ENCODE measurements at regions of chr4 and their contacts with region 1.

Region 1: DNA sequence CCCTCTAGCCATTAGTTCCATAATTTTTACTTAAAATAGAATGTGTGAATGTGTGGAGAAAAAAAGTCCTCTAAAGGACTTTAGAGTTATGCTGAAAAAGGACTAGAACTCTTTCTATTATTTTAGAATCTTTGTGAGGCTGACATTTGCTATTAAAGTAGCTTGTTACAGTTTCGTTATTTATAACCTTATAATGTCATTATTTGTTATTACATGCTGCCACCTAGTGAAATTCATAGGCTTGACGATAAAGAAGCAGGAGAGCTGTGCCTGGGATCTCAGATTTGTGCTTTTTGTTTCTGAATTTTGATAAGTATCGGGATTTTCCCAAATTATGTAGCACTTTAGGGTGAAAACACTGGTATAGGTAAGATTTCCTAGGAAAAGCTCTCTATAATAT is 38.5 kb upstream of the TAPT1 start:
- DNase-seq: peak; percentile 61 to 79 (median 74)
- H3K4me3 ChIP-seq: no peak overlapping the region
- H3K27ac ChIP-seq: no peak overlapping the region
- H3K4me1 ChIP-seq: peaks cover 6 to 10% (median 8%) of the 10 kb centered on the region in 4 experiments
- H3K27me3 ChIP-seq: no peaks in the 10 kb centered on the region

Region 2: GRCh38 chr4:15963001-15963451 is 301.8 kb before region 1 on chr4 and contains the start of gene FGFBP2:
- CTCF ChIA-PET with region 1: interaction called, 14 read pairs
- POLR2A ChIA-PET with region 1: no interaction called
- DNase-seq: peak; percentile 71 to 88 (median 84)
- H3K4me3 ChIP-seq: peak within 1 kb of the TSS in 2 of 7 experiments; percentile 23 to 46
- H3K27ac ChIP-seq: no peak within 1 kb of the TSS
- H3K4me1 ChIP-seq: peaks cover 5 to 15% (median 10%) of the 10 kb centered on the region in 4 experiments
- H3K27me3 ChIP-seq: no peaks in the 10 kb centered on the region

Region 3: DNA sequence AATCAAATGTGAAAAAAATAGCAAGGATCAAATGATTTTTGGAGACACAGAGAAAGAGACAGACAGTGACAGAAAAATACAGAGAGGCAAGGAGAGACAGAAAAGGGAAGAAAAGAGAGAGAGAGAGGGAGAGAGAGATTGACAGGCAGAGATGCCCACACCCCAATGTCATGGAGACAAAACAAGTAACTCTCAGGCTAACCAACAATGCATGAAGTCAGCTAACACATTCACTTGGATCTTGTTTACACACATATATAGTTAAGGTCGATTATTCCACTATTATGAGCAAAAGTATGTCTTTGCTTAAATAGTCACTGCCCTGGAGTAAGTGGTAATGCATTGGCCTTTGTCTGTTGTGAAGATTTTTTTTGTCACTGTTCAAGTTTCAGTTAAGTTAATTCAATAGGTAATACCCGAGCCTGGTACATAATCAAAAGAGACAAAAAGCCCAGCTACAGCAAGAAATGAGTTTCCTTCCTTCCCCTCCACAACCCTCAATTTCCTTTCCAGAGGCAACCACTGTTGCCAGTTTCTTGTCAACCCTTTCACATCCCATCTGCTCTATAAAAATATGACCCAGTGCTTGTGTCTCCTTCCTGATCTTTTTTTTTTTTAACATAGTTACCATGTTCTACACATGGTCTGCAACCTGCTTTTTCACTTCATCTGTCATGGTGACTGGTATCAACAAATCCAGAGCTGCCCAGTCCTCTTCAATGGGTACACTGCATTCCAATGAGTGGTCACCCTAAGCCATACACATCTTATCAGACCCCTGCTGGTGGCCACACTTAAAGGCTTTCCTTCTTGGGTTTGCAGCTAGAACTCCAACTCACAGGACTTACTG is 233.0 kb before region 1 on chr4:
- CTCF ChIA-PET with region 1: interaction called, 10 read pairs
- POLR2A ChIA-PET with region 1: interaction called, 5 read pairs
- DNase-seq: peak; percentile 48 to 90 (median 85)
- H3K4me3 ChIP-seq: peak overlapping the region in 3 of 7 experiments; percentile 21 to 46 (median 38)
- H3K27ac ChIP-seq: peak overlapping the region; percentile 69 to 82
- H3K4me1 ChIP-seq: peaks cover 28 to 81% (median 68%) of the 10 kb centered on the region in 4 experiments
- H3K27me3 ChIP-seq: no peaks in the 10 kb centered on the region

Region 4: DNA sequence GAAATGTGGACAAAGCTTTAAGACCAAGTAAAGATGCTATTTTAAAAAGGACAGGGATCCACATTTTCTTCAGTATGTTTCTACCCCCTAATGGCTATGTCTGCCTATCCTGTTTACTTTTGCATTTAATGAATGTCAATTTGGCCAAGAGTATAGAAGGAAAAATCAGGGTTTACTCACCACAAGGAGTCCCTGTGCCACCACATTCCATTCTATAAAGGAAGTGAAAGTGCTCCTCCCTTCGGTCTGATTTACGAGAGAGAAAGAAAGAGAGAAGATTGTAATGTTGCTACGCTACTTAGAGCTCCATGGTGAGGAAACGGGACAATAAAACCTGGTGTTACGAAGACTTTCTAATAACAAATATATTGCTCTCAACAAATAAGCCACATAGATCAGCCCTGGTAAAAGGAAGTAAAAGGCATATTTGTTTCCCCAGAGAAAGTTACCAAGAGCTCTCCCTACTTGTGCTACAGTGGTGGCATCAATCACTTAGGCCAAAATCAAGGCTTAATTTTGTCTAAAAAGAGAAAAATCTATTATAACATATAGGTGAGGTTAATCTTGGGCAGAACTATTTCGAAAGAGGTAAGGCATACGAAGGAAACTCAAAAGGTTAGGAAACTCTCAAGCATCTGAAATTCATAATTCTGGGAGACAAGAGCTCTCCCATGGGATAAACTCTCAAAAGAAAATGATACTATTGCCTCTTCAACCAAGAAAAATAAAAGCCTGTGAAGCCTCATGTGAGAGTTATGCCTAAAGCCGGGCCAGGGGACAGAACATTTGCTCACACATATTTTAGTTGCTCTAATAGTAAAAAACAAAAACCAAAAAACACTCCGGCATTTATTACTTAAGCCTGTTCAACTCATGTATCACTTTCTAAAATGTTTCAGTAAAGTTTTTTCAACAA is 68.1 kb before region 1 on chr4:
- CTCF ChIA-PET with region 1: interaction called, 28 read pairs
- POLR2A ChIA-PET with region 1: no interaction called
- DNase-seq: peak; percentile 55 to 70 (median 67)
- H3K4me3 ChIP-seq: peak overlapping the region in 4 of 7 experiments; percentile 15 to 53 (median 40)
- H3K27ac ChIP-seq: no peak overlapping the region
- H3K4me1 ChIP-seq: peaks cover 9 to 22% (median 13%) of the 10 kb centered on the region in 4 experiments
- H3K27me3 ChIP-seq: no peaks in the 10 kb centered on the region

Region 5: DNA sequence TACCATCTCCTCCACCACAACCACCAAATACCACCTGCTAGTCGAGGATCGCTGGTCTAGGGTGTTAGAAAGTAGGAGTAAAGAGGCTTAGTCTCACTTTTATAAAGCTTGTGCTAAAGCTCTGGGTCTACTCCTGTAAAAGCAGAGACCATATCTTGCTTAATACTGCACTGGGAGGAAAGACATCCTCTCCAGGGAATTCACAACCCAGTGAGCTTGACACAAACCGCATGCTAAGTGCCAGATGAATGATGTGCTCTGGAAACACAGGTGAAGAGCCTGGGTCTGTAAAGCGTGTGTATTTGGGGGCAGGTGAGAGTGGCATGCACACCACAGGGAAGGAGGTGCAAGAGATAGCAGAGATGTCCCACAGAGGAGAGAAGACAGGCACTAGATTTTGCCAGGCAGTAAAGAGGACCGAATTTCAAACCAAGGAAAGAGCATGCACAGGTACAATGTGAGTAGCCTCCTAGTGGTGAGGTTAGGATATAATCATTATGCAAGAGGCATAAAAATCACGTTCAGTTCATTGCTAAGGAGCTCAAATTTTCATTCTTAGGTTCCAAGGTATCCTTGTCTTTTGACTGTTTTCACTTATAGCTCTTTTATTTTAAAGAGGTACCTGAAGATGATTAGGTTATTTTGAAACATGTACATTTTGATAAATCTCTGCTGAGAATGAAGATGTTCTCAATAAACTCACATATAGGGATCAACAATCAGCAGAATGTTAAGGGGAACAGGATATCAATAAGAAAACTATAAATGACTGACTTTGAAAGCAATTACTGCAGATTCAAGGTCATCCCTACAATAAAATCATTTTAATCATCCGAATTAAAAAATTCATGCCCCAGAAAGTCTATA is 59.3 kb before region 1 on chr4:
- CTCF ChIA-PET with region 1: interaction called, 25 read pairs
- POLR2A ChIA-PET with region 1: no interaction called
- DNase-seq: peak in 2 of 3 donors; percentile 61 to 63
- H3K4me3 ChIP-seq: no peak overlapping the region
- H3K27ac ChIP-seq: no peak overlapping the region
- H3K4me1 ChIP-seq: peaks cover 3 to 30% (median 18%) of the 10 kb centered on the region in 4 experiments
- H3K27me3 ChIP-seq: no peaks in the 10 kb centered on the region

Region 6: DNA sequence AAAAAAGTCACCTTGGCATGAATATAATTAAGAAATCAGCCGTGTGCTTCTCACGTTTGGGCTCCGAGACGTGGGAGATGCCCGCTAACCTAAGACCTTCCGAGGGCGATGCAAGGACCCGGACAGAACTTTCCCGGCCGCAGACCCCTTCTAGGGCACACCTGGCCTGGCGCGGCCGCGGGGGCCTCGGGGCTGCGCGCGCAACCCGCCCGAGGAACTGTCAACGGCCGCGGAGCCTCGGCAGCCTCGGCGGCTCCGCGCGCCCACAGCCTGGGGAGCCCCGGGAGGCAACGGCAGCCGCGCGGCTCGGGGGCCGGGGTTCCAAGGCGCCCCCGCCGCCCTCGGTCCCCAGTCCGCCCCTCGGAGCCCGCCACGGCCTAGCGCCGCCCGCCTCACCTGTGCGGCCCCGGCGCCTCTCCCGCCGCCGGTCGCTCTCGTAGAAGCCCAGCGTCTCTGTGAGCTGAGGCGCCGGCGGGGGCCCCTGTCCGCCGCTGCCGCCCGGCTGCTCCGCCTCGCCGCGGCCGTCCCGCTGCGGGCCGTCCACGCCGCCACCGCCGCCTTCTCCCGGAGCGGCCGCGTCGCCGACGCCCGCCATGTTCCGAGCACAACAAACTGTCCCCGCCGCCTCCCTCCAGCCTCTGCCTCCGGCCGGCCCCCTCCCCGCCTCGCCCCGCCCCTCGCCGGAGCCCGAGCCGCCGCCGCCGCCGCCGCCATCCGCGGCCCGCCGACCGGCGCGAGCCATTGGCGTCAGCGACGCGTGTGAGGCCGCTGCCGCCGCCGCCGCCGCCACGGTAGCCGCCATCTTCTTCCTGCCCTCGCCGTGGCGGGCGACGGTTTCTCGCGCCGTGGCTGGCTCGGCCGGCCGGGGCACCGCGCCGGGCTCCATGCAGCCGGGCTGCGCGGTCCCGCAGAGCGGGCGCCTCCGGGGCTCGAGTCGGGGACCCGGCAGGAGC is 38.7 kb before region 1 on chr4 and contains the start of gene TAPT1:
- CTCF ChIA-PET with region 1: interaction called, 13 read pairs
- POLR2A ChIA-PET with region 1: interaction called, 3 read pairs
- DNase-seq: peak; percentile 71 to 81 (median 75)
- H3K4me3 ChIP-seq: peak within 1 kb of the TSS; percentile 77 to 100 (median 92)
- H3K27ac ChIP-seq: peak within 1 kb of the TSS; percentile 85 to 92
- H3K4me1 ChIP-seq: peaks cover 34 to 64% (median 54%) of the 10 kb centered on the region in 4 experiments
- H3K27me3 ChIP-seq: no peaks in the 10 kb centered on the region

Region 7: DNA sequence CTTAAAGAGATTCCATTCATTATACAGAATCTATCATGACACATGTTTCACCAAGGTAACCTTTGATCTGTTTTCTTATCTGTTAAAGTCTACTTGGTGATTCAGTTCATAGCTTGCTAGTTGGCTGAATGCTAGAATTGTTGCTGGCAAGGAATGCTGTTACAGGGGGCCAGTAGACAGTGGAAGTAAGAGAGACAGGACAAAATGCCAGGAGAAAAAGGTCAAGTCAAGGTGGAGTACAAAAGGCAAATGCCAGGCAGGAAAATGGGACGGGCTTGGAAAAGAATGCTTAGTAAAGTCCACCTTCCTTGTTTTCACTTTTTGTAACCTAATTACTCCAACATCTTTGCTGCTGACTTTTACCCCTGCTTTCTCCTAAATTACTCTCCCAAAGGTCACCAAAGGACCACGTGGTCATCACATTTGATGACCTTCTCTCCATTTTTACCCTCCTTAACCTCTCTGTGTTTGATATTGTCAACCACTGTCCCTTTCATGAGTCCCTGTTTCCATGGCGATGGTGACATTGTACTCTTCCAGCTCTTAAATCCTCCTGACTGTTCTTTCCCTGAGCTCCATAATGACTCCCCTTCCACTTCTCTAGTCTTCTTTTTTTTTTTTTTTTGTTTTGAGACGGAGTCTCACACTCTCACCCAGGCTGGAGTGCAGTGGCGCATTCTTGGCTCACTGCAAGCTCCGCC is 14.0 kb before region 1 on chr4:
- CTCF ChIA-PET with region 1: interaction called, 13 read pairs
- POLR2A ChIA-PET with region 1: no interaction called
- DNase-seq: no peak
- H3K4me3 ChIP-seq: no peak overlapping the region
- H3K27ac ChIP-seq: no peak overlapping the region
- H3K4me1 ChIP-seq: no peaks in the 10 kb centered on the region
- H3K27me3 ChIP-seq: no peaks in the 10 kb centered on the region

Measured in common myeloid progenitor, CD34-positive (primary cell).